ENCODE measurements at regions of chr3 and their contacts with region 1.

Region 1: GRCh38 chr3:122101646-122102045 is 46.5 kb downstream of the CD86 start:
- DNase-seq: peak; percentile 66
- H3K4me3 ChIP-seq: no peak overlapping the region
- H3K27ac ChIP-seq: no peak overlapping the region
- H3K4me1 ChIP-seq: no peaks in the 10 kb centered on the region
- H3K27me3 ChIP-seq: no peaks in the 10 kb centered on the region
- CTCF ChIP-seq: peak; percentile 73 to 76

Region 2: GRCh38 chr3:121883507-121883906 is 218.1 kb before region 1 on chr3:
- CTCF ChIA-PET with region 1: no interaction called
- dilution Hi-C with region 1: no loop called
- in situ Hi-C with region 1: no loop called
- intact Hi-C with region 1: loop called (anchors 2 kb)
- DNase-seq: peak; percentile 46
- H3K4me3 ChIP-seq: no peak overlapping the region
- H3K27ac ChIP-seq: no peak overlapping the region
- H3K4me1 ChIP-seq: peaks cover 10% of the 10 kb centered on the region
- H3K27me3 ChIP-seq: no peaks in the 10 kb centered on the region
- CTCF ChIP-seq: peak; percentile 45 to 56

Region 3: GRCh38 chr3:122014741-122015140 is 86.9 kb before region 1 on chr3:
- CTCF ChIA-PET with region 1: no interaction called
- dilution Hi-C with region 1: no loop called
- in situ Hi-C with region 1: no loop called
- intact Hi-C with region 1: no loop called
- DNase-seq: peak; percentile 53
- H3K4me3 ChIP-seq: no peak overlapping the region
- H3K27ac ChIP-seq: no peak overlapping the region
- H3K4me1 ChIP-seq: peaks cover 5% of the 10 kb centered on the region
- H3K27me3 ChIP-seq: no peaks in the 10 kb centered on the region
- CTCF ChIP-seq: no peak

Region 4: DNA sequence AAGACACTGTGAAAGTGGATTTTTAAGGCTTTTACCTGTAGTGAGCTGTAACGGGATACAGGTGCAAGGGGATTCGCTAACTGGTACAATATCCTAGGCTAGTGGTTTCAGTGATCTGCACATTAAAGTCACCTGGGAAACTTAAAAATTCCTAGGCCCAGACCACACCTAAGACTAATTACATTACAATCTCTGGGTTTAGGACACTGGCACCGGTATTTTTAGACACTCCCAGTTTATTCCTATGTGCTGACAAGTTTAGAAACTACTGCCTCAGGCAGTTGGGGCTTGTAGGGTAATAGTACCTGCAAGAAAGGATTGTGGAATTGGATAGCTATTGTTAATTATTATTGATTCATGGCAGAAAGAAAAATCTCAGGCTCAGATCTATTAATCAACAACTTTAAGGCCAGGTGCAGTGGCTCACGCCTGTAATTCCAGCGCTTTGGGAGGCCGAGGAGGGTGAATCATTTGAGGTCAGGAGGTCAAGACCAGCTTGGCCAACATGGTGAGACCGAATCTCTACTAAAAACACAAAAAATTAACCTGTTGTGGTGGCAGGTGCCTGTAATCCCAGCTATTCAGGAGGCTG is 31.4 kb after region 1 on chr3:
- CTCF ChIA-PET with region 1: interaction called, 18 read pairs
- dilution Hi-C with region 1: no loop called
- in situ Hi-C with region 1: no loop called
- intact Hi-C with region 1: no loop called
- DNase-seq: peak; percentile 26
- H3K4me3 ChIP-seq: no peak overlapping the region
- H3K27ac ChIP-seq: no peak overlapping the region
- H3K4me1 ChIP-seq: peaks cover 8% of the 10 kb centered on the region
- H3K27me3 ChIP-seq: no peaks in the 10 kb centered on the region
- CTCF ChIP-seq: no peak

Region 5: GRCh38 chr3:122268257-122269024 is 166.8 kb after region 1 on chr3:
- CTCF ChIA-PET with region 1: no interaction called
- dilution Hi-C with region 1: no loop called
- in situ Hi-C with region 1: loop called in 1 of 2 experiments (anchors 10 kb)
- intact Hi-C with region 1: no loop called
- DNase-seq: no peak
- H3K4me3 ChIP-seq: no peak overlapping the region
- H3K27ac ChIP-seq: no peak overlapping the region
- H3K4me1 ChIP-seq: no peaks in the 10 kb centered on the region
- H3K27me3 ChIP-seq: no peaks in the 10 kb centered on the region
- CTCF ChIP-seq: no peak

Region 6: DNA sequence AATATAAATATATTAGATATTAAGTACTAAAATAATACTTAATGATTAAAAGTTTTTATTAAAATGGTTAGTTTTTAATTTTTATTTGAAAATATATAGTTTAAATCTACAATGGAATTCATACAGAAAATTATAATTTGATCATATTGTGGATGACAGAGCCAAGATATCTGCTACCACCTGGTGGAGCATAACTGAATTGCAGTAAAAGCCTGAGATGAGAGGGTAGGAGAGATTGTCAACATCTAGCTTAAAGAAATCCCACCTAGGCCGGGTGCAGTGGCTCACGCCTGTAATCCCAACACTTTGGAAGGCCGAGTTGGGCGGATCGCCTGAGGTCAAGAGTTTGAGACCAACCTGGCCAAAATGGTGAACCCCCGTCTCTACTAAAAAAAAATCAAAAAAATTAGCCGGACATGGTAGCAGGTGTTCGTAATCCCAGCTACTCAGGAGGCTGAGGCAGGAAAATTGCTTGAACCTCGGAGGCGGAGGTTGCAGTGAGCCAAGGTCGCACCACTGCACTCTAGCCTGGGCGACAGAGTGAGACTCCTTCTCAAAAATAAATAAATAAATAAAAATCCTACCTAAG is 198.3 kb after region 1 on chr3:
- CTCF ChIA-PET with region 1: interaction called, 3 read pairs
- dilution Hi-C with region 1: no loop called
- in situ Hi-C with region 1: no loop called
- intact Hi-C with region 1: loop called (anchors 1 kb)
- DNase-seq: no peak
- H3K4me3 ChIP-seq: no peak overlapping the region
- H3K27ac ChIP-seq: no peak overlapping the region
- H3K4me1 ChIP-seq: no peaks in the 10 kb centered on the region
- H3K27me3 ChIP-seq: no peaks in the 10 kb centered on the region
- CTCF ChIP-seq: peak; percentile 67 to 70

Region 7: GRCh38 chr3:122356415-122356814 is 254.8 kb after region 1 on chr3:
- CTCF ChIA-PET with region 1: no interaction called
- dilution Hi-C with region 1: no loop called
- in situ Hi-C with region 1: no loop called
- intact Hi-C with region 1: loop called (anchors 1 kb)
- DNase-seq: peak; percentile 72
- H3K4me3 ChIP-seq: no peak overlapping the region
- H3K27ac ChIP-seq: no peak overlapping the region
- H3K4me1 ChIP-seq: peaks cover 21% of the 10 kb centered on the region
- H3K27me3 ChIP-seq: no peaks in the 10 kb centered on the region
- CTCF ChIP-seq: peak; percentile 68 to 84

Region 8: DNA sequence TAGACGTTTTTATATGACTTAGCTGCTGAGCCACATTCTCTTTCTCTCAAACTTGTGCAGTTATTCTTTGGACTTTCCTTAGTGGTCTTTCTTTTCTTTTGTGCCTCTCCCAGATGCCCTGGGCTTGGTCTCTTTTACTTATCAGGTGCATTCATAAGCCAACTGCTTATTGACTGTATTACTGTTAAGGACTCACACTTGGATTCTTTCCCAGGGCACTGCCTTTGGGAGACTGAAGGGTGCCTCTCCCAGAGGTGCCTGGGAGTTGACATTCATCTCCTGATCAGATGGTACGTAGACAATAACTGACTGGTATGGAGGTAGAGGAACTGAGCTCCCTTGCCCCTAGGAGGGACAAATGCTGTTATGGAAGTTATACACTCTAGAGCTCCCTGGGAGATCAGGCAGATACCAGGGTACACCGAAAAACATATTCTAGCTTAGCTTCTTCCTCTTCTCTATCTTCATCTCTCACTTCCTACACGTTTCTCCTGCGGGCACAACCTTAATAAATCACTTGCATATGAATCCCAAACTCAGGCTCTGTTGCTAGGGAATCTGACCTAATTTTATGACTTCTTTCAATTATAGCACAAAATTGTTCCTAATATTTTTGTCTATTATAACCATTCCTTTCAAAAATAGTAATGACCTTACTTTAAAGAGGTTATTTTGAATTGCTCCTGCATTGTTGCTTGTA is 500.5 kb after region 1 on chr3:
- CTCF ChIA-PET with region 1: no interaction called
- dilution Hi-C with region 1: no loop called
- in situ Hi-C with region 1: no loop called
- intact Hi-C with region 1: no loop called
- DNase-seq: no peak
- H3K4me3 ChIP-seq: no peak overlapping the region
- H3K27ac ChIP-seq: no peak overlapping the region
- H3K4me1 ChIP-seq: no peaks in the 10 kb centered on the region
- H3K27me3 ChIP-seq: no peaks in the 10 kb centered on the region
- CTCF ChIP-seq: no peak